H1 (cell line): ENCODE measurements at regions of chr7 and their contacts with region 1.

Region 1: DNA sequence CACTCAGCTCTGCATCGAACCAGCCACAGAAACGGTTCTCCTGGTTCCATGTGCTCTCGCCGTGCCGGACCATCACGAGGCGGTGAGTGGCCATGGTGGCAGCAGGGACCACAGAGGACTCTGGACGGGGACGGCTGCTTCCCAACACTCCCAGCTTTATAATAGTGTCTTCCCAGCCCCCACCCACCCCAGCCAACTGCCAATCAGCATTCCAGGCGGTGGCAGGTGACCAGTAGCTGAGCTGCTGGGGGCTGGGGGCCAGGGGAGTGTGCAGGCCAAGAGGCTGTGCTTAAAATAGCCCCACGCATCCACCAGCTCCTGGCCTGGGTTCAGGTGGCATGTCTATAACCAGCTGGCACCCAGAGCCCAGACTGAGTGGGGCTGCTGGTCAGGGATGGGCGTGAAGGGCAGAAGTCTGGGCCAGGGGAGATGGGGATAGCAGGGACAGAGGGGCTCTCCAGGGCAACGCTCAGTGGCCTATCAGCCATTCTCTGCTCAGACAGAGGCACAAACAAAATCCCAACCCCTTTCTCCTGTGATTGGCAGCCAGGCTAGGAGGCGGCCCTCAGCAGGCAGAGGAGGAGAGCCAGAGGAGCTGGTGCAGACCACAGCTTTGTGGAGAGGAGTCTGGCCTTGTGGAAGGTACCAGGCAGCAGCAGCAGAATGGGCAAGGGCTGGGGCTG is at the start of gene PGAM2:
- DNase-seq: peak in 1 of 2 experiments; percentile 65
- H3K4me3 ChIP-seq: peak within 1 kb of the TSS in 2 of 4 experiments; percentile 2 to 20; a peak in 1 of 8 replicates
- H3K27ac ChIP-seq: no peak within 1 kb of the TSS
- H3K4me1 ChIP-seq: peaks cover 9 to 30% (median 26%) of the 10 kb centered on the region in 4 experiments
- H3K27me3 ChIP-seq: peaks cover 0 to 3% (median 0%) of the 10 kb centered on the region in 4 experiments; a peak in 2 of 7 replicates
- CTCF ChIP-seq: no peak
- EP300 ChIP-seq: no peak
- POLR2A ChIP-seq: no peak
- RAD21 ChIP-seq: no peak
- total RNA-seq, gene PGAM2: 1.4 and 2.1 TPM in 2 replicates

Region 2: GRCh38 chr7:43879477-43879876 is 186.1 kb before region 1 on chr7:
- CTCF ChIA-PET with region 1: no interaction called
- POLR2A ChIA-PET with region 1: no interaction called
- DNase-seq: no peak
- H3K4me3 ChIP-seq: no peak overlapping the region
- H3K27ac ChIP-seq: no peak overlapping the region
- H3K4me1 ChIP-seq: peaks cover 1 to 4% (median 2%) of the 10 kb centered on the region in 4 experiments; a peak in 3 of 7 replicates
- H3K27me3 ChIP-seq: no peaks in the 10 kb centered on the region
- CTCF ChIP-seq: no peak
- EP300 ChIP-seq: no peak
- POLR2A ChIP-seq: no peak
- RAD21 ChIP-seq: no peak

Region 3: DNA sequence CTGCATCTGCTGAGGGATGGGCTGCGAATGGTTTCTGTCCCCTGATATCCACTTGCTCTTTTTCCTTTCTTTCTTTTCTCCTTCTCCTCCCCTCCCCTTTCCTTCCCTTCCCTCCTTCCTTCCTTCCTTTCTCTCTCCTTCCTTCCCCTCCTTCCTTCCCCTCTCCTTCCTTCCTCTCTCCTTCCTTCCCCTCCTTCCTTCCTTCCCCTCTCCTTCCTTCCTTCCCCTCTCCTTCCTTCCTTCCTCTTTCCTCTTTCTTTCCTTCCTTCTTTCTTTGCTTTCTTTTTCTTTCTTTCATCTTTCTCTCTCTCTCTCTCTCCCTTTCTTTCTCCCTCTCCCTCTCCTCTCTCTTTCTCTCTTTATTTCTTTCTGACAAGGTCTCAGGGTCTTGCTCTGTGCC is 88.1 kb before region 1 on chr7:
- CTCF ChIA-PET with region 1: no interaction called
- POLR2A ChIA-PET with region 1: no interaction called
- DNase-seq: no peak
- H3K4me3 ChIP-seq: no peak overlapping the region
- H3K27ac ChIP-seq: no peak overlapping the region
- H3K4me1 ChIP-seq: no peaks in the 10 kb centered on the region; a peak in 1 of 7 replicates
- H3K27me3 ChIP-seq: no peaks in the 10 kb centered on the region
- CTCF ChIP-seq: no peak
- EP300 ChIP-seq: no peak
- POLR2A ChIP-seq: no peak
- RAD21 ChIP-seq: no peak

Region 4: GRCh38 chr7:44044315-44045225 is 21.0 kb before region 1 on chr7 and contains the start of gene DBNL:
- CTCF ChIA-PET with region 1: interaction called, 9 read pairs
- POLR2A ChIA-PET with region 1: interaction called, 16 read pairs
- DNase-seq: peak; percentile 44 to 97
- H3K4me3 ChIP-seq: peak within 1 kb of the TSS; percentile 79 to 92 (median 83)
- H3K27ac ChIP-seq: no peak within 1 kb of the TSS
- H3K4me1 ChIP-seq: peaks cover 0 to 6% (median 0%) of the 10 kb centered on the region in 4 experiments; a peak in 3 of 7 replicates
- H3K27me3 ChIP-seq: no peaks in the 10 kb centered on the region; a peak in 2 of 7 replicates
- CTCF ChIP-seq: no peak
- EP300 ChIP-seq: no peak
- POLR2A ChIP-seq: no peak
- RAD21 ChIP-seq: no peak
- total RNA-seq, gene DBNL: 30.9 and 32.1 TPM in 2 replicates

Region 5: DNA sequence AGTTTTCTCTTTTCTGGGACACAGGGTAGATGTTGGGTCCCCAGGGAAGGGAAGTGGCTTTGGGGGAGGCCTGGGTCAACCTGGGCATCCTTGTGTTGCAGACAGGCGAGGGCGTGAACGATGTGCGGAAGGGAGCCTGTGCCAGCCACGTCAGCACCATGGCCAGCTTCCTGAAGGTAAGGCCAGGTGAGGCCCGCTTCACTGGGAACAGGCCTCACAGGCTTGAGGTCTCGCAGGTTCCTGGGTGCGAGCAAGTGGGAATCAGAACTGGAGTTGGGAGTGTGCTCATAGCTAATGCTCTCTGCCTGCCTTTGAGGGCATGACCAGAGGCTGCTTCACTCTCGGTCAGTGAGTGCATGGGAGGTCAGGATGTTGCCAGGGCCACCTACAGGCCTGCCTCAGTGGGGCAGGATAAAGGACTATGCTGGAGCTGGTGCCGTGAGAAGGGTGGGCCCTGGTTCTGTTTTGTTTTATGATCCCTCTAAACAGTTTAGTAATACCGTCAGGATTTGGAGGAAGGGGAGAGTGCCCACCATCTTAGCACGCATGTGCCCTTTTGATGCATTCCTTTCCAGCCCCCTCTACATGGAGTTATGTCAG is 12.7 kb before region 1 on chr7:
- CTCF ChIA-PET with region 1: interaction called, 6 read pairs
- POLR2A ChIA-PET with region 1: interaction called, 12 read pairs
- DNase-seq: no peak
- H3K4me3 ChIP-seq: no peak overlapping the region
- H3K27ac ChIP-seq: no peak overlapping the region
- H3K4me1 ChIP-seq: no peaks in the 10 kb centered on the region
- H3K27me3 ChIP-seq: no peaks in the 10 kb centered on the region
- CTCF ChIP-seq: peak in 1 of 3 experiments; percentile 3; a peak in 1 of 4 replicates
- EP300 ChIP-seq: no peak
- POLR2A ChIP-seq: no peak
- RAD21 ChIP-seq: no peak

Region 6: GRCh38 chr7:44112231-44113000 is 46.8 kb after region 1 on chr7:
- CTCF ChIA-PET with region 1: interaction called, 10 read pairs
- POLR2A ChIA-PET with region 1: interaction called, 11 read pairs
- DNase-seq: no peak
- H3K4me3 ChIP-seq: no peak overlapping the region
- H3K27ac ChIP-seq: no peak overlapping the region
- H3K4me1 ChIP-seq: peaks cover 0 to 2% (median 0%) of the 10 kb centered on the region in 4 experiments; a peak in 1 of 7 replicates
- H3K27me3 ChIP-seq: no peaks in the 10 kb centered on the region
- CTCF ChIP-seq: no peak
- EP300 ChIP-seq: no peak
- POLR2A ChIP-seq: no peak
- RAD21 ChIP-seq: no peak